ENCODE measurements at regions of chr5 and their contacts with region 1.

Region 1: DNA sequence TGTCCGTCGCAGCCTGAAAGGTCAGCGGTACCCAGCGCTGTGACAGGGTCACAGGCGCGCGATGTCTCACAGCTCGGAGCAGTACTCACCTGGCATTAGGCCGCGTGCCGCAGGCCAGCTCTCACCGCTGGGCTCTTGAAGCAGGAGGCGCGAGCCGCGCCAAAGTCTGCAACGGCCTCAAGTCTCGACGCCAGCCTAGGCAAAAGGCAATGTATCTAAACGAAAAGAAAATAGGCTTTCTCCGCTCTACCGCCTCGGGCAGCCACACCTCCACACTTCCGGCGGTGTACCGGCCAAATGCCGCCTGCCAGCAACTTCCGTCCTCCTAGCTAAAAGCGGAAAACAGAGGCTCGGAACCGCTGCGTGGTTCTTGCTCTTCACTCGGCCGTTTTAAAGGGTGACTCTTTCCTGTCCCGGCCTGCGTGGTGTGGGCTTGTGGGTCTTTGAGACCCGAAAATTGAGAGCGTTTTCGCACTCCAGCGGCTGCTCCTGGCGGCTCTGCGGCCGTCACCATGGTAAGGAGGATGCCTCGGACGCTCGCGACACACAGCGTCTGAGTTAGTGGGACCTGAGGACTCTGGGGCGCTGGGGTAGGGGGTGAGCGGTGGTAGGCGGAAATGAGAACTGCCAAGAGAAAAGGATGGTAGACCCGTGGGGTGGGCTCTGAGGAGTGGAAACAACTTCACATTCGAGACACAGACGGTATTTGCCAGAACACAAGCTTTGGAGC is at the starts of genes GFM2 and NSA2:
- DNase-seq: peak; percentile 95
- ATAC-seq: peak; percentile 89
- H3K4me3 ChIP-seq: peak within 1 kb of the TSS; percentile 71 to 99 (median 92)
- H3K4me3 Mint-ChIP-seq: peak within 1 kb of the TSS; percentile 100
- H3K27ac ChIP-seq: peak within 1 kb of the TSS; percentile 62 to 85
- H3K27ac Mint-ChIP-seq: peak within 1 kb of the TSS; percentile 98
- H3K4me1 ChIP-seq: peaks cover 20 to 21% of the 10 kb centered on the region in 2 donors
- H3K4me1 Mint-ChIP-seq: peaks cover 29% of the 10 kb centered on the region
- H3K27me3 ChIP-seq: no peaks in the 10 kb centered on the region
- H3K27me3 Mint-ChIP-seq: no peaks in the 10 kb centered on the region
- CTCF ChIP-seq: no peak
- total RNA-seq, gene GFM2: 22.6 and 28.5 TPM in 2 replicates
- total RNA-seq, gene NSA2: 126 and 129 TPM in 2 replicates

Region 2: GRCh38 chr5:73498057-73499008 is 1268.7 kb before region 1 on chr5 and contains the start of gene BTF3:
- CTCF ChIA-PET with region 1: no interaction called
- POLR2A ChIA-PET with region 1: no interaction called
- intact Hi-C with region 1: loop called (anchors 2 kb)
- DNase-seq: peak; percentile 96
- ATAC-seq: peak; percentile 95
- H3K4me3 ChIP-seq: peak within 1 kb of the TSS; percentile 60 to 98 (median 97)
- H3K4me3 Mint-ChIP-seq: peak within 1 kb of the TSS; percentile 99
- H3K27ac ChIP-seq: peak within 1 kb of the TSS; percentile 96 to 99
- H3K27ac Mint-ChIP-seq: peak within 1 kb of the TSS; percentile 99
- H3K4me1 ChIP-seq: peaks cover 19 to 33% of the 10 kb centered on the region in 2 donors
- H3K4me1 Mint-ChIP-seq: peaks cover 37% of the 10 kb centered on the region
- H3K27me3 ChIP-seq: no peaks in the 10 kb centered on the region
- H3K27me3 Mint-ChIP-seq: peaks cover 13% of the 10 kb centered on the region
- CTCF ChIP-seq: no peak
- total RNA-seq, gene BTF3: 452 and 466 TPM in 2 replicates

Region 3: DNA sequence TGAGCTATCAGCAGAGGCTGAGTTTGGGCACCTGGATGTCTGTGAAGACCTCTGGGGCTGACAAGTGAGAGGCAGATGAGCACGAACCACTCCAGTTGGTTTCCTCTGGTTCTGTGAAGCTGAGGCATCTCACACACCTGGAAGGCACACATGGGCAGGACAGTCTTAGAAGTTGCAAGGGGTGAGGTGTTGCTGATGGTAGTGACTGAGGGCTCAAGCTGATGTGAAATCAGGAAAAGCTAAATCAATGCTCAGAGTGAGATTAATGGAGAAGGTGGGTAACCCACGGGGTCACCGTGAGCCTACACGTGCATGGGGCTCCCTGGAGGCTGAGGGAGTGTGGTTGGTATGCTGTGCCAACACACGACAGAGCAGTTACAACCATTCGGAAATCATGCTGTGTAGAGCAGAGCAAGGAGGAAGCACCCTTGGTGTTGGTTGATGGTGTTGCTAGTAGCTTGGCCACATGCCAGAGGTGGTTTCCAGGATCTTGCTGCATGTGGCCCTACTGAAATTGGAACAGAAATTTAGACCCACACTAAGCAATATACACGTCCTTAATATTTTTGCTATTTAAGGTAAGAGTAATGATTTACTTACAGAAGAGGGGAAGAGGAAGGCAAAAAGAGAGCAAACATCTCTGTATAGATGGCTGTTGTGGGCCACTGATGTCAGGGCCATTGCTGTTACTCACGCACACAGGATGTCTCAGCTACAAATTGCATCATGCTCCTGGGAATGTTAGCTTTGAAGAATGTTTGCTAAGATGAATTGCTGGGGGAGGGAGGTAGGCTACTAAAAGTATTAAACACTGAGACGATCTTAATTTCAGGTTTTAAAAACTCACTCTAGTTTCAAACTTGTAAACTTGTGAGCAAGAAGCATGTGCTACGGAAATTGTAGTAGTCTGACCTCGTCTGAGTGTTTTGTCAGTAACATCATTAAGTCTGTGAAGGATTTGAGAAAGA is 970.6 kb before region 1 on chr5:
- CTCF ChIA-PET with region 1: no interaction called
- POLR2A ChIA-PET with region 1: no interaction called
- intact Hi-C with region 1: no loop called
- DNase-seq: no peak
- ATAC-seq: no peak
- H3K4me3 ChIP-seq: no peak overlapping the region
- H3K4me3 Mint-ChIP-seq: no peak overlapping the region
- H3K27ac ChIP-seq: no peak overlapping the region
- H3K27ac Mint-ChIP-seq: no peak overlapping the region
- H3K4me1 ChIP-seq: no peaks in the 10 kb centered on the region
- H3K4me1 Mint-ChIP-seq: no peaks in the 10 kb centered on the region
- H3K27me3 ChIP-seq: peaks cover 0 to 3% (median 0%) of the 10 kb centered on the region in 4 experiments
- H3K27me3 Mint-ChIP-seq: peaks cover 25% of the 10 kb centered on the region
- CTCF ChIP-seq: no peak

Region 4: GRCh38 chr5:74684900-74685851 is 81.8 kb before region 1 on chr5 and contains the start of gene HEXB:
- CTCF ChIA-PET with region 1: interaction called, 4 read pairs
- POLR2A ChIA-PET with region 1: no interaction called
- intact Hi-C with region 1: loop called (anchors 1 kb)
- DNase-seq: peak; percentile 80
- ATAC-seq: peak; percentile 85
- H3K4me3 ChIP-seq: peak within 1 kb of the TSS; percentile 80 to 98 (median 88)
- H3K4me3 Mint-ChIP-seq: peak within 1 kb of the TSS; percentile 87
- H3K27ac ChIP-seq: peak within 1 kb of the TSS; percentile 42 to 67
- H3K27ac Mint-ChIP-seq: peak within 1 kb of the TSS; percentile 75
- H3K4me1 ChIP-seq: peaks cover 12 to 16% of the 10 kb centered on the region in 2 donors
- H3K4me1 Mint-ChIP-seq: peaks cover 20% of the 10 kb centered on the region
- H3K27me3 ChIP-seq: no peaks in the 10 kb centered on the region
- H3K27me3 Mint-ChIP-seq: peaks cover 2% of the 10 kb centered on the region
- CTCF ChIP-seq: no peak
- total RNA-seq, gene HEXB: 47.1 and 55.3 TPM in 2 replicates

Region 5: GRCh38 chr5:74865804-74866595 is 99.0 kb after region 1 on chr5 and contains the start of gene FAM169A:
- CTCF ChIA-PET with region 1: no interaction called
- POLR2A ChIA-PET with region 1: no interaction called
- intact Hi-C with region 1: loop called (anchors 2 kb)
- DNase-seq: peak; percentile 72
- ATAC-seq: peak; percentile 64
- H3K4me3 ChIP-seq: peak within 1 kb of the TSS; percentile 55 to 73 (median 67)
- H3K4me3 Mint-ChIP-seq: peak within 1 kb of the TSS; percentile 88
- H3K27ac ChIP-seq: peak within 1 kb of the TSS in 1 of 2 donors; percentile 60
- H3K27ac Mint-ChIP-seq: peak within 1 kb of the TSS; percentile 85
- H3K4me1 ChIP-seq: peaks cover 10 to 14% of the 10 kb centered on the region in 2 donors
- H3K4me1 Mint-ChIP-seq: peaks cover 26% of the 10 kb centered on the region
- H3K27me3 ChIP-seq: peaks cover 0 to 16% (median 7%) of the 10 kb centered on the region in 4 experiments
- H3K27me3 Mint-ChIP-seq: peaks cover 24% of the 10 kb centered on the region
- CTCF ChIP-seq: no peak
- total RNA-seq, gene FAM169A: 8.1 and 9.4 TPM in 2 replicates

Region 6: DNA sequence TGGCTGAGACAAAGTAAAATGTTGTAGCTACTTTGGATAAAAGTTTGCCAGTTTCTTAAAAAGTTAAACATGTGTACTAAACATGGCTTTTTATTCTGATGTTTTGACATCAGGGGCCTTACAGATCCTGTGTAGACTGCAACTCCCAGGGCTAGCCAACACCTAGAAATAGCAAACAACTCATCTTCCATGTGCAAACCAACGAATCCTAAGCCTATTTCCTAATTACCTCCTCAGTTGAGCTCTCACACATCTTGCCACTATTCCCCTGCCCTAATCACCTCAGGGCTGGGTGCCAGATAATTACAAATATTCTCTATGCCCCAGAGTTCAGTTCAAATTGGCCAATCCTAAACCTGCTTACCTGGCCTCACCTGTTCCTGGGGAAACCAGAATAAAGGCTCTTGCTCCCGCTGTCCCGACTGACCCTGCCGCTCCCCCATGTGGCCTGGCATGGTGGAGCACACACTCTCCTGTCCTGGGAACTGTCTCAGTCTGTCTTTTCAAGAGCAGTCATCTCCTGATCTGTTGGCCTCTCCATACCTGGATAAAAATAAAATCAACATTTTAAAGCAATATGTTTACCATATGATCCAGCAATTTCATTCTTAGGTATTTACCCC is 136.3 kb after region 1 on chr5:
- CTCF ChIA-PET with region 1: no interaction called
- POLR2A ChIA-PET with region 1: no interaction called
- intact Hi-C with region 1: loop called (anchors 1 kb)
- DNase-seq: peak; percentile 20
- ATAC-seq: peak; percentile 67
- H3K4me3 ChIP-seq: no peak overlapping the region
- H3K4me3 Mint-ChIP-seq: no peak overlapping the region
- H3K27ac ChIP-seq: no peak overlapping the region
- H3K27ac Mint-ChIP-seq: no peak overlapping the region
- H3K4me1 ChIP-seq: no peaks in the 10 kb centered on the region
- H3K4me1 Mint-ChIP-seq: no peaks in the 10 kb centered on the region
- H3K27me3 ChIP-seq: no peaks in the 10 kb centered on the region
- H3K27me3 Mint-ChIP-seq: no peaks in the 10 kb centered on the region
- CTCF ChIP-seq: peak; percentile 19

Measured in B cell (primary cell).